ENCODE measurements at regions of chr3 and their contacts with region 1.

Region 1: DNA sequence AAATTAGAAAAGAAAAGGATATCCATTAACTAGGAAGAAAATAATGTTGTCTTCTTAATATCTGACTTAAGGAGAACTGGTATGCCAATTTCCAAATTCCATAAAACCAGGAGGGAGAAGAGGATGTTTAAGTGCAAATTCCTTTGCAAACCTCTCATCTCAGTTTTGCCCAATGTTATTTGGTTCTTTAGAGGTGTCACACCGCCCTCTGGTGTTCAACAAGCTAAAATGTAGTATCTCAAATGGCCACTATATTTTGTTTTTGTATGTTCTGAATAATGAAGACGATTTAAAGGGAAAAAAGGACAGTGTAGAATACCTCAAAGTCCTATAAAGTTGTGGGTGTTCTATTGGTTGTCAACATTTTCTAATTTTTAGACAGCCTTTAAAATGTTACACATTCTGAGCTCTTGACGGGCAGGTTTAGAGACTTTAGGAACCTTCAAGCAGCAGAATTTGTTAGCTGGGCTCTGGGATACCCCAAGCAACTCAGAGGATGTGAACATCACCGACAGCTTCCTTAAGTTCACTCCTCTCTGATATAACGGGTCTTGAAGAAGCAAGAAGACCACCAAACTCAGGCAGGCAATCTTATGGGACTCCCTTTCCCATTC is 458.3 kb downstream of the MFSD1 start:
- DNase-seq: no peak
- ATAC-seq: peak; percentile 79
- H3K4me3 ChIP-seq: no peak overlapping the region
- H3K27ac ChIP-seq: no peak overlapping the region
- H3K4me1 ChIP-seq: no peaks in the 10 kb centered on the region
- H3K27me3 ChIP-seq: no peaks in the 10 kb centered on the region; a peak in 1 of 4 replicates
- CTCF ChIP-seq: peak; percentile 50 to 70 (median 59); a peak in 5 of 6 replicates
- EP300 ChIP-seq: no peak
- POLR2A ChIP-seq: no peak
- RAD21 ChIP-seq: peak; percentile 91

Region 2: DNA sequence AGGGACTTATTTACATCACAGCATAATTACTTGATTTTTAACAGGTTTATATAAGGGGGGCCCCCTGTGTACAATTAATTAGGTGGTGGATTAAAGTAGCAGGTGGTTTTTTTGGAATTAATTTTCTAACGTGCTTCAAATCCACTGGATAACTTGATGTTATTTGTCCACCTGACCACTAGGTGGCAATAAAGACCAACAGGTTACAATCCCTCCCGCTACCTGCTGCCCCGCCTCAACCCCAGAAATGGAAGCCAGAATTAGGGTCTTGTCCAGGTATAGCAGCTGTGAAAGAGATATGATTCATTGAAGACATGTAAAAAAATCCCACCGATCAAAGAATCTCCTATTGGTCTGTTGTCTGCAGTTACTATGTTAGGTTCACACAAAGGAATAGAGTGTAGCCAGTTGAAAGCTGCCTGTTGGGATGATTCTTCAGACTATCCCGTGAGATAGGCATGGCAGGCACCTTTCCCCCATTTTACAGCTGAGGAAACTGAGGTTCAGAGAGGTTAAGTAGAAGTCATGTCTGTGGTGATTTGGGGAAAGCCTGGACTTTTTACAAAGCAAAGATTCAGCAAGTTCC is 414.3 kb before region 1 on chr3:
- CTCF ChIA-PET with region 1: interaction called, 141 read pairs
- POLR2A ChIA-PET with region 1: no interaction called
- RAD21 ChIA-PET with region 1: interaction called, 62 read pairs
- SMC1A ChIA-PET with region 1: interaction called, 41 read pairs
- in situ Hi-C with region 1: loop called (anchors 5 kb)
- intact Hi-C with region 1: loop called (anchors 1 kb)
- DNase-seq: no peak
- ATAC-seq: peak; percentile 64
- H3K4me3 ChIP-seq: no peak overlapping the region
- H3K27ac ChIP-seq: no peak overlapping the region
- H3K4me1 ChIP-seq: peaks cover 9% of the 10 kb centered on the region
- H3K27me3 ChIP-seq: no peaks in the 10 kb centered on the region
- CTCF ChIP-seq: peak; percentile 59 to 81 (median 68)
- EP300 ChIP-seq: no peak
- POLR2A ChIP-seq: no peak
- RAD21 ChIP-seq: peak; percentile 83

Region 3: DNA sequence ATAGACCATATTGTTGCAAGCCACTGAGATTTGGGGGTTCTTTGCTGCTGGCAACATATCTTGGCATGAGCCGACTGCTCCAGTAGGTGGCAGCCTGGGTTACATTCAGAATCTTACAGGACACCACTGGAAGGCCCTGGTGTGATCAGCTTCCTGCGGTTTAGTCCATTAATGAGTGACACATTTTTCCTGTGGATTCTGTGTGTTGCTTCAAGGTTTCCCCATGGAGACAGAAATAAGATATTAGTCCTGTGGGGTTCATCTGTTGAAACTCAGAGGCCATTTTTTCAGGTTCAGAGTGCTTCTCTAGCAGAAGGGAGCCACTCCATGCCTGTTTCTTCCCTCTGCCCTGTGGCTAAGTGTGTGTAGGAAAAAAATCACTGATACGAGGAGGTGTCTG is 342.1 kb before region 1 on chr3:
- CTCF ChIA-PET with region 1: interaction called, 26 read pairs
- POLR2A ChIA-PET with region 1: no interaction called
- RAD21 ChIA-PET with region 1: interaction called, 8 read pairs
- SMC1A ChIA-PET with region 1: interaction called, 7 read pairs
- in situ Hi-C with region 1: loop called (anchors 5 kb)
- intact Hi-C with region 1: loop called (anchors 1 kb)
- DNase-seq: no peak
- ATAC-seq: peak; percentile 94
- H3K4me3 ChIP-seq: no peak overlapping the region
- H3K27ac ChIP-seq: no peak overlapping the region
- H3K4me1 ChIP-seq: no peaks in the 10 kb centered on the region
- H3K27me3 ChIP-seq: no peaks in the 10 kb centered on the region
- CTCF ChIP-seq: peak; percentile 63 to 81 (median 79)
- EP300 ChIP-seq: no peak
- POLR2A ChIP-seq: no peak
- RAD21 ChIP-seq: peak; percentile 63

Region 4: DNA sequence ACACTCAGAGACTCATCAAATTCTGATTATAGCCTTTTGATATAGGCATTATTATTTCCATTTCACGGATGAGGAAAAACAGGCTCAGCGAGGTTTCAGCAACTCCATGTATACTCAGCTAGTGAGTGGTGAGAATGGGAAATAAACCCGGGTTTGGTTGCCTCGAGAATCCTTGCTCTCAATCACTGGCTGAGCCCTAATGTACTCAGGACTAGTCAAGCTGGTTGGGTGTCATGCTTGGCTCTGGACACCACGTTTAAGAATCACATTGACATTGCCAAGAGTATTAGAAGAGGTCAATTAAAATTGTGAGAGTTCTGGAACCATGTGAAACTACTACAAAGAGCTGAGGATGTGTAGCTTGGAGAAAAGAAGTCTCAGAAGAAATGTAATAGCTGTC is 13.8 kb before region 1 on chr3:
- CTCF ChIA-PET with region 1: interaction called, 10 read pairs
- POLR2A ChIA-PET with region 1: no interaction called
- RAD21 ChIA-PET with region 1: no interaction called
- SMC1A ChIA-PET with region 1: interaction called, 4 read pairs
- in situ Hi-C with region 1: no loop called
- intact Hi-C with region 1: no loop called
- DNase-seq: no peak
- ATAC-seq: no peak
- H3K4me3 ChIP-seq: no peak overlapping the region
- H3K27ac ChIP-seq: no peak overlapping the region
- H3K4me1 ChIP-seq: no peaks in the 10 kb centered on the region
- H3K27me3 ChIP-seq: no peaks in the 10 kb centered on the region
- CTCF ChIP-seq: no peak
- EP300 ChIP-seq: no peak
- POLR2A ChIP-seq: no peak
- RAD21 ChIP-seq: no peak

Region 5: DNA sequence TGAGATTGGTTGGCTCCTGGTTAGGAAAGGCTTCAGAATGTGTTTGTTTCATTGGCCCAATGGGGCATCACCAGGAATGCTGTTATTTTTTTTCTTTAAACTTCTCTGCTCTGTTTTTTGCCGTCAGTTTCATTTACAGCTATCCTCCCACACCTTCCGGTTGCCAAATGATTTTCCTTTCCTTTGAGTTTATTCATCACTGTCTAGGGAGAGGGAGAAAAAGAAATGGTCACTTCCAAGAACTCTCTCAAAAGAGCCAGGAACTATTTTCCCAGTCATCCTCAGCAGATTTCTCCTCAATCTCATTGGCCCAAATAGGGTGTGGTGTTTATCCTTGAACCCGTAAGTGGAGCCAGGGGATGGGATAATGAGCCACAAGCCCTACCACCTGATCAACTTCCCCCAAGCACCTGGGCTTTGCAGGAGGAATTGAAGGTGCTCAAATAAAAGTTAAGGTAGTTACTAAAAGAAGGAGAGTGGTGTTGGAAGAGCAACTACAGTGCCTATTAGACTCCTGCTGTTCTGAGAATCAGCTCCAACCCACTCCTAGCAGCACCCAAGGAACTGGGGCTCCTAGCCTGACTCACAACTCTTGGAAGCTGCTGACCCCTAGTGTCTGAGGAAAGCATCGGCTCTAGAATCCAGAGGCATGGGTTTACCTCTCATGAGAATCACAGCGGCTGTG is 544.7 kb after region 1 on chr3:
- CTCF ChIA-PET with region 1: interaction called, 49 read pairs
- POLR2A ChIA-PET with region 1: no interaction called
- RAD21 ChIA-PET with region 1: interaction called, 7 read pairs
- SMC1A ChIA-PET with region 1: interaction called, 4 read pairs
- in situ Hi-C with region 1: no loop called
- intact Hi-C with region 1: loop called (anchors 1 kb)
- DNase-seq: no peak
- ATAC-seq: peak; percentile 99
- H3K4me3 ChIP-seq: no peak overlapping the region
- H3K27ac ChIP-seq: no peak overlapping the region
- H3K4me1 ChIP-seq: no peaks in the 10 kb centered on the region
- H3K27me3 ChIP-seq: peaks cover 0 to 1% of the 10 kb centered on the region in 2 experiments; a peak in 2 of 4 replicates
- CTCF ChIP-seq: peak; percentile 87 to 92 (median 90)
- EP300 ChIP-seq: no peak
- POLR2A ChIP-seq: no peak
- RAD21 ChIP-seq: peak; percentile 96

Region 6: DNA sequence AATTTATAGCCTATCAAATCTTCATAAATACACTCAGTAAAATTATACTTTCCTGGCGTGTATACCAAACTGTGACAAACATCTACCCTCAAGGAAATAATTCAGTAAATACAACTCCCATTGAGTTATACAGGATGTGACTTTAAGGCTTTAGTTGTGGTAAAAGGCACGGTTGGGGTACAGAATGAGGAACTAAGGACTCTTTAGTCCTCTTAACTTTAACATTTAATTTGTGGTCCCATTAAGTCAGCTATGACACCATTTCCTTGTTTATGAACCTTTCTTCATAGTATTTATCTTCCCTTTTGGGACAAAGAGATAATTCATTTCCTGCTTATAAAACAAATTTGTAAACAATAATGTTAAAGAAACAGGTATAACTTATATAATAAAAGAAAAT is 1108.6 kb after region 1 on chr3:
- CTCF ChIA-PET with region 1: no interaction called
- POLR2A ChIA-PET with region 1: no interaction called
- RAD21 ChIA-PET with region 1: no interaction called
- SMC1A ChIA-PET with region 1: no interaction called
- in situ Hi-C with region 1: no loop called
- intact Hi-C with region 1: no loop called
- DNase-seq: no peak
- ATAC-seq: peak; percentile 89
- H3K4me3 ChIP-seq: no peak overlapping the region
- H3K27ac ChIP-seq: no peak overlapping the region
- H3K4me1 ChIP-seq: no peaks in the 10 kb centered on the region
- H3K27me3 ChIP-seq: no peaks in the 10 kb centered on the region
- CTCF ChIP-seq: no peak
- EP300 ChIP-seq: no peak
- POLR2A ChIP-seq: no peak
- RAD21 ChIP-seq: no peak